Activated naive CD4-positive, alpha-beta T cell treated with anti-CD3 and anti-CD28 coated beads for 36 hours (primary cell): ENCODE measurements at regions of chr12 and their contacts with region 1.

Region 1: GRCh38 chr12:81992461-81992860 is 233.3 kb upstream of the PPFIA2 start:
- DNase-seq: peak; percentile 58
- H3K4me3 Mint-ChIP-seq: no peak overlapping the region
- H3K27ac Mint-ChIP-seq: no peak overlapping the region
- H3K4me1 Mint-ChIP-seq: peaks cover 4% of the 10 kb centered on the region
- H3K27me3 Mint-ChIP-seq: no peaks in the 10 kb centered on the region

Region 2: DNA sequence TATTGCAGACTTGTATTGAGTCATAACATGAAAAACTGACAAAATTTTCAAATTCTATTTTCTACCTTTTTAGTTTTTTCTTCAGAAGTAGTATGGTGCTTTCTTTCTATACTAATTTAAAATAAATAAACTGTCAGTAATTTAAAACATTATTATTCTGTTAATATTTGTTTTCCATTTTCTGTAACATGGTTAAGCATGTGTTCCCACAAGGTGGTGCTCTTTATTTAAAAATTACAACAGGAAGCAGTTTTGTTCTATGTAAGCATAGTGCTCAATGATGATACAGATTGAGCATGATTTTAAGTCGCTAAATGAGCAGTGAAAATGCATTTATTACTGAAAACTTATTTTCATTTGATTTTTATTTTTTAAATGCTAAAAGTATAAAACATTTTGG is 348.0 kb before region 1 on chr12:
- CTCF ChIA-PET with region 1: interaction called, 7 read pairs
- intact Hi-C with region 1: loop called (anchors 1 kb)
- DNase-seq: no peak
- H3K4me3 Mint-ChIP-seq: no peak overlapping the region
- H3K27ac Mint-ChIP-seq: no peak overlapping the region
- H3K4me1 Mint-ChIP-seq: no peaks in the 10 kb centered on the region
- H3K27me3 Mint-ChIP-seq: peaks cover 11% of the 10 kb centered on the region

Region 3: DNA sequence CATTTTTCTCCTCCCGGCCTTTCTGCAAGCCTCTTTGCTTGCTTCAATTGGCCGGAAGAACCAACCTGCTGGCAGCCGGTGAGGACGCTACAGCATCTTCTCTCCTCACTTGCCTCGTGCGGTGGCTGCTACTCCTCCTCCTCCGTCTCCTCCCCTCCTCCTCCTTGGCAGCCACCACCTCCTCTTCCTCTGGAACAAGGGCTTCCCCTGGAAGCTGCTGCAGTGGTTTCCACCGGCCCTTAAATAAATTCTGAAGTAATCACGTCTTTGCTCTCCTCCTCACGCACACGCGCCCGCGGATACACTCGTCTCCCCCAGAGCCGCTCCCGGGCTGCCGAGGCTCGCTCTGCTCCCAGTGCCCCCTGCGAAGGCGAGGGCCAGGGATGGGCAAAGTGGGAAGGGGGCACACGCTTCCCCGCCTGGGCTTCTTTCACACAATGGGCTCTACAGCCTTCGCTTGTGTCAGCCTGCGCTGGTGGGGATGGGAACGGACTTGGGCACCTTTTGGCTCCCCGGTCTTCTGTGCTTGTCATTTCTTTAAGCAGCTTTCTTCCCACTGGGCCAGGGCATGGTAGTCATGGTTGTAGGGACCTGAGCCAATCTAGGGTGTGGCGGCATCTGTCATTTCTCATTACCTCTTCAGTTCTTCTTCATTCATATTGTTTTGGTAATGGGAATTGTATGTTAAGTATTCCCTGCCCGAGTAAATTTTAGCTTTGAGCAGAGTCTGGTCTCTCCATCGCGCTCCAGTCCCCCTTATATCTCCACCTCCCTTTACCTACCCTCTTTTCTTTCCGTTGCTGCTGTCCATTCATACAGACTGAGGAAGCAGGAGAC is 233.0 kb before region 1 on chr12 and contains the start of gene PPFIA2:
- CTCF ChIA-PET with region 1: no interaction called
- intact Hi-C with region 1: loop called (anchors 1 kb)
- DNase-seq: peak; percentile 53
- H3K4me3 Mint-ChIP-seq: peak within 1 kb of the TSS; percentile 67
- H3K27ac Mint-ChIP-seq: no peak within 1 kb of the TSS
- H3K4me1 Mint-ChIP-seq: peaks cover 13% of the 10 kb centered on the region
- H3K27me3 Mint-ChIP-seq: peaks cover 40% of the 10 kb centered on the region
- total RNA-seq, gene PPFIA2: not detected

Region 4: GRCh38 chr12:81974762-81975161 is 17.7 kb before region 1 on chr12:
- CTCF ChIA-PET with region 1: no interaction called
- intact Hi-C with region 1: no loop called
- DNase-seq: no peak
- H3K4me3 Mint-ChIP-seq: no peak overlapping the region
- H3K27ac Mint-ChIP-seq: no peak overlapping the region
- H3K4me1 Mint-ChIP-seq: no peaks in the 10 kb centered on the region
- H3K27me3 Mint-ChIP-seq: no peaks in the 10 kb centered on the region

Region 5: DNA sequence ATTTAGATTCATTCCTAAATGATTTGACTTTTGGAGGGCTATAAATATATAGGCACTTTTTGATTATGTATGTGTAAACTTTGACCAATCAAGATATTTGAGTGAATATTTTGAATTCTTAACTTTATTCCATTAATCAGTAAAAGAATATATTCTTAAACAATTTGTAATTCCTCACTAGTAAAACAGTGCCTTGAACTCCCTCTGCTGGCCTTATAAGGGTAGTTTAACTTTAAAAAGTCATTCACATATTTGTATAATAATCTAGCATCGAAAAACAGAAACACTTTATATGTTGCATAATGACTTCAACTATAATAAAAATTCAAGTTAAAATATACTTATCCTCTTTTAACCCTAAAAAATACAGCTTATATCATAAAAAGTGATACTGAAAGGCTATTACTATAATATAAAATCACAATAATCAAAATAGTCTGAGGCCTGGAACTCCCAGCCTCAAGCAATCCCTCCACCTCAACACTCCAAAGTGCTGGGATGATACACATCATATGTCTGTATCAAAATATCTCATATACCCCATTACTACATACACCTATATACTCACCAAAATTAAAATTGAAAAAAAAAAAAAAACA is 334.5 kb after region 1 on chr12:
- CTCF ChIA-PET with region 1: interaction called, 3 read pairs
- intact Hi-C with region 1: loop called (anchors 10 kb)
- DNase-seq: no peak
- H3K4me3 Mint-ChIP-seq: no peak overlapping the region
- H3K27ac Mint-ChIP-seq: no peak overlapping the region
- H3K4me1 Mint-ChIP-seq: no peaks in the 10 kb centered on the region
- H3K27me3 Mint-ChIP-seq: no peaks in the 10 kb centered on the region